CD8-positive, alpha-beta T cell (primary cell): ENCODE measurements at regions of chr19 and their contacts with region 1.

Region 1: DNA sequence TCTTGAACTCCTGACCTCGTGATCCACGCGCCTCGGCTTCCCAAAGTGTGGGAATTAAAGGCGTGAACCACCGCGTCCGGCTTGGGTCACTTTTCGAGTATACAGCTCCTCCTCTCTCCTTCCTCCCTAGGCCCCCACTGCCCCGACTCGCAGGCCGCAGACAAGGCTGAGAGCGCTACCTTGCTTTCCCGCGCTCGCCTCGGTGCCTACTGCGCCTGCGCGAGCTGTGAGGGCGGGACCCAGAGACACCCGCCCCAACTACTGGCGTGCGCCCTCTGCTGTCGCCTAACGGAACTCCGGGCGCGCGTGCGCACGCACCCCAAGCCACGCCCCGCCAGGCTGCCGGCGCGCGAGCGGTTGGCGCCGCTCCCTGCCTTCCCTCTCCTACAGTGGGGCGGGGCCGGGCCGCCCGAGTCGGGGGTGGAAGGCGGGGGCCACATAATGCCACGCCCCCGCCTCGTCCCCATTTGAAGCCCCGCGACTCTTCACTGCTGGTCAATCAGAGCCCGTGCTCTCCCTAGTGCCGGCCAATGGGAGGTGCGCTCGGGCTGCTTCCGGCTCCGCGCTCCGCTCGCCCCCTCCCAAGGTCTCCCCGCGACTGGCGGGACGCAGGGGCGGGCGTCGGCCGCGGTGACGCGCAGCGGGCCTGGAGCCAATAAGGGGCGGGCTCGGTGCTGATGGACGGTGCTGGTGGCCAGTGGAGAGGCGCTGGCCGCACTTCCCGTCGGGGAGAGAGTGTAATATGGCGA is at the start of gene RAB8A:
- DNase-seq: peak; percentile 98 to 100 (median 99)
- ATAC-seq: peak; percentile 87
- H3K4me3 ChIP-seq: peak within 1 kb of the TSS; percentile 98 to 100
- H3K4me3 Mint-ChIP-seq: peak within 1 kb of the TSS; percentile 97
- H3K27ac ChIP-seq: peak within 1 kb of the TSS; percentile 93 to 98
- H3K27ac Mint-ChIP-seq: peak within 1 kb of the TSS; percentile 98
- H3K4me1 ChIP-seq: peaks cover 41% of the 10 kb centered on the region
- H3K4me1 Mint-ChIP-seq: peaks cover 39% of the 10 kb centered on the region
- H3K27me3 ChIP-seq: no peaks in the 10 kb centered on the region
- H3K27me3 Mint-ChIP-seq: no peaks in the 10 kb centered on the region
- CTCF ChIP-seq: peak; percentile 84
- total RNA-seq, gene RAB8A: 79.1 to 88.4 TPM

Region 2: GRCh38 chr19:15836595-15837337 is 274.6 kb before region 1 on chr19:
- CTCF ChIA-PET with region 1: interaction called, 3 read pairs
- POLR2A ChIA-PET with region 1: no interaction called
- intact Hi-C with region 1: loop called in 1 of 2 experiments (anchors 10 kb)
- DNase-seq: peak; percentile 90 to 99 (median 95)
- ATAC-seq: peak; percentile 87
- H3K4me3 ChIP-seq: peak overlapping the region; percentile 64 to 78
- H3K4me3 Mint-ChIP-seq: peak overlapping the region; percentile 91
- H3K27ac ChIP-seq: peak overlapping the region; percentile 96 to 97
- H3K27ac Mint-ChIP-seq: peak overlapping the region; percentile 98
- H3K4me1 ChIP-seq: peaks cover 22% of the 10 kb centered on the region
- H3K4me1 Mint-ChIP-seq: peaks cover 31% of the 10 kb centered on the region
- H3K27me3 ChIP-seq: no peaks in the 10 kb centered on the region
- H3K27me3 Mint-ChIP-seq: no peaks in the 10 kb centered on the region
- CTCF ChIP-seq: no peak

Region 3: GRCh38 chr19:16025108-16026101 is 85.9 kb before region 1 on chr19:
- CTCF ChIA-PET with region 1: no interaction called
- POLR2A ChIA-PET with region 1: no interaction called
- intact Hi-C with region 1: no loop called
- DNase-seq: peak in 2 of 9 experiments; percentile 22 to 24
- ATAC-seq: no peak
- H3K4me3 ChIP-seq: no peak overlapping the region
- H3K4me3 Mint-ChIP-seq: no peak overlapping the region
- H3K27ac ChIP-seq: no peak overlapping the region
- H3K27ac Mint-ChIP-seq: no peak overlapping the region
- H3K4me1 ChIP-seq: no peaks in the 10 kb centered on the region
- H3K4me1 Mint-ChIP-seq: no peaks in the 10 kb centered on the region
- H3K27me3 ChIP-seq: no peaks in the 10 kb centered on the region
- H3K27me3 Mint-ChIP-seq: no peaks in the 10 kb centered on the region
- CTCF ChIP-seq: no peak

Region 4: DNA sequence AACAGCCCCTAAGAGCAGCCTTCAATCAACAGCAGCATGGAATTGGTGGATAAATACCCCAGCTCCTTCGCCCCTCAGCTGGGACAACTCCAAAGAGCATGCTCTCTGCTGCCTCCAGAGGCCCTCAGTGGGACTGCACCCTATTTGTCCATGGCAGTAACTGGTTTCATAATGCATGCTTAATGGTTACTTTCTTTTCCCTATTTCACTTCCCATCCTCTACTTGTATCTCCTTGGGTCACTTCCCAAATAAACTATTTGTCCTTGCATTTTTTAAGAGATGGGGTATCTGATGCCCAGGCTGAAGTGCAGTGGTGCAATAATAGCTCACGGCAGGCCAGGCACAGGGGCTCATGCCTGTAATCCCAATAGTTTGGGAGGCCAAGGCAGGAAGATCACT is 48.5 kb before region 1 on chr19:
- CTCF ChIA-PET with region 1: interaction called, 7 read pairs
- POLR2A ChIA-PET with region 1: interaction called, 4 read pairs
- intact Hi-C with region 1: loop called in 1 of 2 experiments (anchors 1 kb)
- DNase-seq: peak; percentile 51 to 78 (median 66)
- ATAC-seq: peak; percentile 86
- H3K4me3 ChIP-seq: no peak overlapping the region
- H3K4me3 Mint-ChIP-seq: no peak overlapping the region
- H3K27ac ChIP-seq: no peak overlapping the region
- H3K27ac Mint-ChIP-seq: no peak overlapping the region
- H3K4me1 ChIP-seq: peaks cover 26% of the 10 kb centered on the region
- H3K4me1 Mint-ChIP-seq: peaks cover 16% of the 10 kb centered on the region
- H3K27me3 ChIP-seq: no peaks in the 10 kb centered on the region
- H3K27me3 Mint-ChIP-seq: no peaks in the 10 kb centered on the region
- CTCF ChIP-seq: peak; percentile 85

Region 5: GRCh38 chr19:16088351-16089009 is 22.9 kb before region 1 on chr19:
- CTCF ChIA-PET with region 1: interaction called, 8 read pairs
- POLR2A ChIA-PET with region 1: interaction called, 11 read pairs
- intact Hi-C with region 1: loop called in 1 of 2 experiments (anchors 2 kb)
- DNase-seq: no peak
- ATAC-seq: no peak
- H3K4me3 ChIP-seq: no peak overlapping the region
- H3K4me3 Mint-ChIP-seq: no peak overlapping the region
- H3K27ac ChIP-seq: no peak overlapping the region
- H3K27ac Mint-ChIP-seq: no peak overlapping the region
- H3K4me1 ChIP-seq: peaks cover 26% of the 10 kb centered on the region
- H3K4me1 Mint-ChIP-seq: peaks cover 30% of the 10 kb centered on the region
- H3K27me3 ChIP-seq: no peaks in the 10 kb centered on the region
- H3K27me3 Mint-ChIP-seq: no peaks in the 10 kb centered on the region
- CTCF ChIP-seq: no peak

Region 6: GRCh38 chr19:16125737-16126495 is 14.6 kb after region 1 on chr19:
- CTCF ChIA-PET with region 1: no interaction called
- POLR2A ChIA-PET with region 1: no interaction called
- intact Hi-C with region 1: no loop called
- DNase-seq: no peak
- ATAC-seq: no peak
- H3K4me3 ChIP-seq: no peak overlapping the region
- H3K4me3 Mint-ChIP-seq: no peak overlapping the region
- H3K27ac ChIP-seq: no peak overlapping the region
- H3K27ac Mint-ChIP-seq: no peak overlapping the region
- H3K4me1 ChIP-seq: no peaks in the 10 kb centered on the region
- H3K4me1 Mint-ChIP-seq: no peaks in the 10 kb centered on the region
- H3K27me3 ChIP-seq: no peaks in the 10 kb centered on the region
- H3K27me3 Mint-ChIP-seq: no peaks in the 10 kb centered on the region
- CTCF ChIP-seq: no peak

Region 7: GRCh38 chr19:16324384-16325160 is 213.2 kb after region 1 on chr19 and contains the start of gene KLF2:
- CTCF ChIA-PET with region 1: no interaction called
- POLR2A ChIA-PET with region 1: no interaction called
- intact Hi-C with region 1: loop called in 1 of 2 experiments (anchors 2 kb)
- DNase-seq: peak; percentile 92 to 98 (median 97)
- ATAC-seq: peak; percentile 58
- H3K4me3 ChIP-seq: peak within 1 kb of the TSS; percentile 87 to 100
- H3K4me3 Mint-ChIP-seq: peak within 1 kb of the TSS; percentile 77
- H3K27ac ChIP-seq: peak within 1 kb of the TSS; percentile 94 to 99
- H3K27ac Mint-ChIP-seq: peak within 1 kb of the TSS; percentile 82
- H3K4me1 ChIP-seq: peaks cover 36% of the 10 kb centered on the region
- H3K4me1 Mint-ChIP-seq: peaks cover 40% of the 10 kb centered on the region
- H3K27me3 ChIP-seq: no peaks in the 10 kb centered on the region
- H3K27me3 Mint-ChIP-seq: no peaks in the 10 kb centered on the region
- CTCF ChIP-seq: no peak
- total RNA-seq, gene KLF2: 817 to 847 TPM

Region 8: GRCh38 chr19:16628183-16628983 is 517.0 kb after region 1 on chr19 and contains the start of gene MED26:
- CTCF ChIA-PET with region 1: no interaction called
- POLR2A ChIA-PET with region 1: no interaction called
- intact Hi-C with region 1: loop called in 1 of 2 experiments (anchors 1 kb)
- DNase-seq: peak; percentile 91 to 99 (median 95)
- ATAC-seq: peak; percentile 89
- H3K4me3 ChIP-seq: peak within 1 kb of the TSS; percentile 89 to 100
- H3K4me3 Mint-ChIP-seq: peak within 1 kb of the TSS; percentile 99
- H3K27ac ChIP-seq: peak within 1 kb of the TSS; percentile 93 to 97
- H3K27ac Mint-ChIP-seq: peak within 1 kb of the TSS; percentile 98
- H3K4me1 ChIP-seq: peaks cover 17% of the 10 kb centered on the region
- H3K4me1 Mint-ChIP-seq: peaks cover 47% of the 10 kb centered on the region
- H3K27me3 ChIP-seq: no peaks in the 10 kb centered on the region
- H3K27me3 Mint-ChIP-seq: no peaks in the 10 kb centered on the region
- CTCF ChIP-seq: no peak
- total RNA-seq, gene MED26: 65.6 to 68.0 TPM